Activated CD4-positive, alpha-beta memory T cell treated with anti-CD3 and anti-CD28 coated beads for 36 hours (primary cell): ENCODE measurements at regions of chr13 and their contacts with region 1.

Region 1: GRCh38 chr13:21402586-21403228 is 56.4 kb downstream of the ZDHHC20 start:
- DNase-seq: peak; percentile 17
- H3K4me3 Mint-ChIP-seq: no peak overlapping the region
- H3K27ac Mint-ChIP-seq: no peak overlapping the region
- H3K4me1 Mint-ChIP-seq: peaks cover 37% of the 10 kb centered on the region
- H3K27me3 Mint-ChIP-seq: no peaks in the 10 kb centered on the region

Region 2: GRCh38 chr13:21458813-21459701 is 56.4 kb after region 1 on chr13 and contains the start of gene ZDHHC20:
- CTCF ChIA-PET with region 1: no interaction called
- POLR2A ChIA-PET with region 1: no interaction called
- intact Hi-C with region 1: loop called (anchors 2 kb)
- DNase-seq: peak; percentile 93
- H3K4me3 Mint-ChIP-seq: peak within 1 kb of the TSS; percentile 93
- H3K27ac Mint-ChIP-seq: peak within 1 kb of the TSS; percentile 90
- H3K4me1 Mint-ChIP-seq: peaks cover 29% of the 10 kb centered on the region
- H3K27me3 Mint-ChIP-seq: no peaks in the 10 kb centered on the region
- total RNA-seq, gene ZDHHC20: 53.5 to 60.6 TPM